ENCODE measurements at regions of chr11 and their contacts with region 1.

Region 1: DNA sequence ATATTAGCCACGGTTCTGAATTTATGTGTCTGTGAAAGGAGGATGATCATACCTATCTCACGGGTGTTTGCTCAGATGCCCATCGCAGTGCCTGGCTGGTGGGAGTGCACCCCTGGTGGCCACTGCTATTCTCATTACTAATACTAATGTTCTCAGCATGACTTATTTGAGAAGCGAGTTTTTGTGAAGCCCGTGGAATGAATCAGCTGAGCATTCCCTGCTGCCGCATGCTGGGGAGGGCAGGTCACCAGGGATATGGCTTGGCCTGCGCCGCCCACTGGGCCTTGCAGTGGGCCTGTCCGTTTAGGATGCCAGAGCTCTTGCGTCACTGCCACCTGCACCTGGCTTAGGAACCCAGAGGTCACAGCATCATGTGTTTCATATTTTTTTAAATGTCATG is 16.9 kb downstream of the CTTN start:
- DNase-seq: peak; percentile 69
- H3K4me3 ChIP-seq: no peak overlapping the region
- CTCF ChIP-seq: peak; percentile 71

Region 2: DNA sequence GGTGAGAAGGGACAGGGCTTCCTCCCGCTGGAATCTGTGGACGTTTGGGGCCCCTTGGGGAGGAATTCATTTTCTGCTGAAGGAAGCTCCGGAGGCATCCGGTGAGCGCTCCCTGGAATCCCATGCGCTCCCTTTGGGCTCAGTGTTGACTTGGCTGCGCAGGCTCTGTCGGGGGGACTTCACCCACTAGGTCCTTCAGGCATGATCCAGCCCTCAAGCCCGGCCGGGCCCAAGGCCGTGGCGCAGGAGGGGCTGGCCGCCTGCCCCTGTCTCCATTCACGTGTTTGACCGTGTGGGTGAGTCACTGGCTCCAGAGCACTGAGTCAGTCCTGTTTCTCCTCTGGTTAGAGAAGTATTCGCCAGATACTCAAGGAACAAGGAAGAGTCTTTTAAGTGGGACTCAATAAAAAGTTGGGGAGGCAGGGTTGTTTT is 15.5 kb before region 1 on chr11:
- CTCF ChIA-PET with region 1: interaction called, 34 read pairs
- POLR2A ChIA-PET with region 1: interaction called, 3 read pairs
- DNase-seq: peak; percentile 85
- H3K4me3 ChIP-seq: peak overlapping the region; percentile 64
- CTCF ChIP-seq: no peak

Region 3: GRCh38 chr11:70836071-70836470 is 420.9 kb after region 1 on chr11:
- CTCF ChIA-PET with region 1: no interaction called
- POLR2A ChIA-PET with region 1: no interaction called
- DNase-seq: no peak
- H3K4me3 ChIP-seq: no peak overlapping the region
- CTCF ChIP-seq: no peak